Naive thymus-derived CD4-positive, alpha-beta T cell (primary cell): ENCODE measurements at regions of chr4 and their contacts with region 1.

Region 1: DNA sequence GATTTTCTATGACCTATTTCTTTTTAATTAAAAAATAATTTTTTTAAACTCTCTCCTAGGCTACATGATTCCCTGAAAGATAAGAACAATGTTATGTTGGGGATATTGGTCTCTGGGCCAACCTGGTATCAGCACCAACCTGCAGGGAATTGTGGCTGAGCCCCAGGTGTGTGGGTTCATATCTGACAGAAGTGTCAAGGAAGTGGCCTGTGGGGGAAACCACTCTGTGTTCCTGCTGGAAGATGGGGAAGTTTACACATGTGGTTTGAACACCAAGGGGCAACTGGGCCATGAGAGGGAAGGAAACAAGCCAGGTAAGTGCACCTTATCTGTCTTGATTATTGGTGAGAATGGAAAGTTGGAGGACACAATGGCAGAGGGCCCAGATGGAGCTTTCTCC is 13.5 kb downstream of the HERC3 start:
- DNase-seq: peak in 1 of 9 donors; percentile 18
- ATAC-seq: peak; percentile 46
- H3K4me3 ChIP-seq: no peak overlapping the region
- H3K4me3 Mint-ChIP-seq: peak overlapping the region; percentile 22 to 73 (median 53)
- H3K27ac ChIP-seq: no peak overlapping the region
- H3K27ac Mint-ChIP-seq: peak overlapping the region in 8 of 9 donors; percentile 21 to 99 (median 74)
- H3K4me1 ChIP-seq: peaks cover 24 to 27% of the 10 kb centered on the region in 2 donors
- H3K4me1 Mint-ChIP-seq: peaks cover 39 to 86% (median 81%) of the 10 kb centered on the region in 7 donors
- H3K27me3 ChIP-seq: no peaks in the 10 kb centered on the region
- H3K27me3 Mint-ChIP-seq: no peaks in the 10 kb centered on the region

Region 2: GRCh38 chr4:88619971-88620370 is 14.2 kb after region 1 on chr4:
- CTCF ChIA-PET with region 1: no interaction called
- POLR2A ChIA-PET with region 1: no interaction called
- intact Hi-C with region 1: loop called in 1 of 2 experiments (anchors 2 kb)
- DNase-seq: no peak
- ATAC-seq: no peak
- H3K4me3 ChIP-seq: no peak overlapping the region
- H3K4me3 Mint-ChIP-seq: peak overlapping the region in 2 of 10 donors; percentile 1 to 40
- H3K27ac ChIP-seq: no peak overlapping the region
- H3K27ac Mint-ChIP-seq: peak overlapping the region in 4 of 9 donors; percentile 5 to 49 (median 38)
- H3K4me1 ChIP-seq: peaks cover 0 to 10% of the 10 kb centered on the region in 2 donors
- H3K4me1 Mint-ChIP-seq: peaks cover 8 to 85% (median 68%) of the 10 kb centered on the region in 7 donors
- H3K27me3 ChIP-seq: no peaks in the 10 kb centered on the region
- H3K27me3 Mint-ChIP-seq: no peaks in the 10 kb centered on the region